ENCODE measurements at regions of chr3 and their contacts with region 1.

Region 1: GRCh38 chr3:52468336-52468735 is 12.9 kb downstream of the NISCH start:
- DNase-seq: no peak
- H3K4me3 ChIP-seq: no peak overlapping the region
- H3K27ac ChIP-seq: peak overlapping the region; percentile 20 to 66 (median 43)
- H3K4me1 ChIP-seq: peaks cover 11 to 52% (median 28%) of the 10 kb centered on the region in 3 donors
- H3K27me3 ChIP-seq: no peaks in the 10 kb centered on the region
- CTCF ChIP-seq: no peak
- POLR2A ChIP-seq: no peak

Region 2: GRCh38 chr3:52606373-52607085 is 138.2 kb after region 1 on chr3:
- intact Hi-C with region 1: no loop called
- DNase-seq: no peak
- H3K4me3 ChIP-seq: no peak overlapping the region
- H3K27ac ChIP-seq: peak overlapping the region in 2 of 4 donors; percentile 6 to 53
- H3K4me1 ChIP-seq: peaks cover 0 to 18% (median 0%) of the 10 kb centered on the region in 3 donors
- H3K27me3 ChIP-seq: no peaks in the 10 kb centered on the region
- CTCF ChIP-seq: no peak
- POLR2A ChIP-seq: no peak

Region 3: DNA sequence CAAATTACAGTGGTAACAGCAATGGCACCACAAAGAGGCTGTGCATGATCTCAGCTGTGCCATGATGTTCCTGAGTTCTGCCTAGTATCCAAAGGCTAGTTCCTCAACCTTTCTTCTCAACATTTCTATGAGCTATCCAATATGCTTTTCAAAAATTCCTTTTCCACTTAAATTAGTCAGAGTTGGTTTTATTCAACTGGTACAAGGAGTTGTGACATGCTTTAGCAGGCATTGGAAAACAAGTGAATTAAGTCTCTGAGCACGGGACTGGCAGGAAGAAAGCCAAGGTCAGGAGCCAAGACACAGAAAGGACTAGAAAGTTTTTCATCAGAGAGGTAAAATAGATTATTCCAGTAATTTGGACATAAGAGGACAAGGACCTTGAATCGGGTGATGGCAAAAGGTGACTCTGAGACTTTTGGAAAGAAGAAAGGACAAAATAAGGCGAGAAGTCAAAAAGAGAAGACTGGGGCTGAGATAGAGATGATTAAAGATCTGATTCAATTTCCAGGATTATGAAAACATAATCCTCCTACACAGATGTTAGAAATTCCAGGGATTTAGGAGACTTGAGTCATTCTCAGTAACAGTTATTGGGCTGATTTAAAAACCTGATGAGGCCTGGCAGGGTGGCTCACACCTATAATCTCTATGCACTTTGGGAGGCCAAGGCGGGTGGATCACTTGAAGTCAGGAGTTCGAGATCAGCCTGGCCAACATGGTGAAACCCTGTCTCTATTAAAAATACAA is 181.3 kb after region 1 on chr3:
- intact Hi-C with region 1: loop called (anchors 10 kb)
- DNase-seq: no peak
- H3K4me3 ChIP-seq: no peak overlapping the region
- H3K27ac ChIP-seq: peak overlapping the region in 2 of 4 donors; percentile 49 to 77
- H3K4me1 ChIP-seq: no peaks in the 10 kb centered on the region
- H3K27me3 ChIP-seq: no peaks in the 10 kb centered on the region
- CTCF ChIP-seq: no peak
- POLR2A ChIP-seq: no peak